ENCODE measurements at regions of chr16 and their contacts with region 1.

Region 1: DNA sequence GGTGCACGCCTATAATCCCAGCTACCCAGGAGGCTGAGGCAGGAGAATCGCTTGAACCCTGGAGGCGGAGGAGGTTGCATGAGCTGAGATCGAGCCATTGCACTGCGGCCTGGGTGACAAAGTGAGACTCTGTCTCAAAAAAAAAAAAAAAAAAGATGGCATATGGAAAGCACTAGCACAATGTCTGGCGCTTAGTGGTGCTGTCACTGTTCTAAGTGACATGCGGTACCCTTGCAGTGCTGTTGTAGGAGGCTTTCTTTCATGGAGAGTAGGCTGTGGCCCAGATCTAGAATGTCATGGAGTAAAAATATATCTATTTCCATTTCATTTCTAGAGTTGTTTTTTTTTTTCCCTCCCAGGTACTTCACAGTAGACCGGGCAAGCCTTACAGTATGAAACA is 14.6 kb upstream of the METTL9 start:
- DNase-seq: no peak
- H3K4me3 Mint-ChIP-seq: no peak overlapping the region
- H3K27ac Mint-ChIP-seq: no peak overlapping the region
- H3K4me1 Mint-ChIP-seq: peaks cover 5% of the 10 kb centered on the region
- H3K27me3 Mint-ChIP-seq: peaks cover 14% of the 10 kb centered on the region

Region 2: GRCh38 chr16:21617607-21618006 is 32.8 kb after region 1 on chr16:
- CTCF ChIA-PET with region 1: no interaction called
- DNase-seq: no peak
- H3K4me3 Mint-ChIP-seq: no peak overlapping the region
- H3K27ac Mint-ChIP-seq: no peak overlapping the region
- H3K4me1 Mint-ChIP-seq: peaks cover 57% of the 10 kb centered on the region
- H3K27me3 Mint-ChIP-seq: no peaks in the 10 kb centered on the region

Region 3: DNA sequence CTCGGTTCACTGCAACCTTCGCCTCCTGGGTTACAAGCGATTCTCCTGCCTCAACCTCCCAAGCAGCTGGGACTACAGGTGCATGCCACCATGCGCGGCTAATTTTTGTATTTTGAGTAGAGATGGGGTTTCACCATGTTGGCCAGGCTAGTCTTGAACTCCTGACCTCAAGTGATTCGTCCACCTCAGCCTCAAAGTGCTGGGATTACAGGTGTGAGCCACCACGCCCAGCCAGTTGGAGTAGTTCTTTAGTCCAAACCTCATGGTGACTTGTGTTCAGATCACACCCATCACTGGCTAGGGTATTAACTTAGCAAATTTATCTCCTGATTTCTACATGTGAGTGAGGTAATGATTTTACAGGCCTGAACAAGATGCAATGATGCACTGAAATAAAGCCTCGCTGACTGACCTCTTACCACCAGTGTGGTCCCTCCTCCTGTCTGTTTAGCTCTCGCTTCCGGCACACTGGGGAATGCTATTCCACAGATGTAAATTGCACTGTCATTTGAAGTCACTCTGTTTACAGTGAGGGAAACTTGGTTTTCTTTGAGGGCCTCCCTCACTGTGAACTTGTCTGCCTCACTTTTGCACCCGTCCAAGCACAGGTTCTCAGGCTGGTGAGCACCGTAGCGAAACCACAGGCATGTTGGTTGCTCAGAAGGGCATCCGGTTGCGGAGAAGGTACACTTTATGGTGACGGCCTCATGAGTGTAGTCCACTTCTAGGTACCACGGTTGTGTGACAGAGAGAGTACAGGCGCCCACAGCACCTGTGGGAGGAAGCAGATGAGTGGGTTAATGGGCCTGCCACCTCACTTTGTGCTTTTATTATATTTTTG is 62.1 kb after region 1 on chr16:
- CTCF ChIA-PET with region 1: interaction called, 107 read pairs
- DNase-seq: peak; percentile 88
- H3K4me3 Mint-ChIP-seq: peak overlapping the region; percentile 73
- H3K27ac Mint-ChIP-seq: peak overlapping the region; percentile 95
- H3K4me1 Mint-ChIP-seq: peaks cover 60% of the 10 kb centered on the region
- H3K27me3 Mint-ChIP-seq: no peaks in the 10 kb centered on the region

Region 4: DNA sequence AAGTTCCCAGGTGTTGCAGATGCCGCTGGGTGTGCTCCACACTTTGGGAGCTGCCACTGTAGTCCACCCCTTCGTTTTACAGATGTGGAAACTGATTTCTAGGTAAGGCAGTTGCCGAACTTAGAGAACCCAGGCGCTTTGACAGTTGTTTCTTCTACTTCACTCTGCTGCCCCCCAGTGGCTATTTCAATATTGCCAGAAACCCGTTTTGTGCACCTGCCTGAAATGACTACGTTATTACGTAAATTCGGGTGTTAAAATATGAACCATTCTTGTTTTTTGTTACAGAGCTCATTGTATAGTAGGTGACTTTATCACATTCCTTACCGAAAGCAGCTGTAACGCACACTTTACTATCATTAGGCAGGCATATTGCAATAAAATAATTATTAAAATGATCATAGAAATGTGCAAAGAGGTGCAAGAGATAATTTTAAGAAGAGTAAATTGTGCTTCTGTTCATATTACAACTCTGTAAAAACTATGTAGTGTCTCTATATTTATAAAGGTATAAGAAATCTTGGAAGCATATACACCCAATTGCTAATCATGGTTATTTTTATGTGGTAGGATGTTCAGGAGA is 123.8 kb after region 1 on chr16:
- CTCF ChIA-PET with region 1: interaction called, 42 read pairs
- DNase-seq: peak; percentile 89
- H3K4me3 Mint-ChIP-seq: no peak overlapping the region
- H3K27ac Mint-ChIP-seq: no peak overlapping the region
- H3K4me1 Mint-ChIP-seq: peaks cover 5% of the 10 kb centered on the region
- H3K27me3 Mint-ChIP-seq: peaks cover 24% of the 10 kb centered on the region